Caco-2 (cell line): ENCODE measurements at regions of chr6 and their contacts with region 1.

Region 1: DNA sequence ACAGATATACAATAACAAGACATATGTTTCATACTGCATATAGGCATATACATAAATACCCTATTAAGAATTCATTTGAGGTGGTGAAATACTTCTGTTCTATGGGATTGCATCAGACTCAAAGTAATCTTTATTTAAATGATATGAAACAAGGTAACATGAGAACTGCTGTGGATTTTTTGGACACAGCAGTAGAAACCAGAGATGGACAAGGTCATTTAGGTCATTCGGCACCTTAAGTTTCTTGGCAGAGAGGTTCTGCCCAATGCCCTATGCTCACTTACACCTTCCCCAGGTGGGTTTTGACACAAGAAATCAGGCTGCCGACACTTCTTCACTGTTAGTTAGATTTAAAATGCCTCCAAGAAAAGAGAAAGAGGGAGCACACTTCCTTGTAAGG is 43.9 kb upstream of the RBM24 start:
- DNase-seq: no peak
- H3K4me3 ChIP-seq: no peak overlapping the region
- H3K4me3 Mint-ChIP-seq: no peak overlapping the region
- H3K27ac Mint-ChIP-seq: no peak overlapping the region
- H3K4me1 ChIP-seq: no peaks in the 10 kb centered on the region
- H3K4me1 Mint-ChIP-seq: no peaks in the 10 kb centered on the region
- H3K27me3 ChIP-seq: no peaks in the 10 kb centered on the region
- H3K27me3 Mint-ChIP-seq: peaks cover 4% of the 10 kb centered on the region
- CTCF ChIP-seq: no peak

Region 2: DNA sequence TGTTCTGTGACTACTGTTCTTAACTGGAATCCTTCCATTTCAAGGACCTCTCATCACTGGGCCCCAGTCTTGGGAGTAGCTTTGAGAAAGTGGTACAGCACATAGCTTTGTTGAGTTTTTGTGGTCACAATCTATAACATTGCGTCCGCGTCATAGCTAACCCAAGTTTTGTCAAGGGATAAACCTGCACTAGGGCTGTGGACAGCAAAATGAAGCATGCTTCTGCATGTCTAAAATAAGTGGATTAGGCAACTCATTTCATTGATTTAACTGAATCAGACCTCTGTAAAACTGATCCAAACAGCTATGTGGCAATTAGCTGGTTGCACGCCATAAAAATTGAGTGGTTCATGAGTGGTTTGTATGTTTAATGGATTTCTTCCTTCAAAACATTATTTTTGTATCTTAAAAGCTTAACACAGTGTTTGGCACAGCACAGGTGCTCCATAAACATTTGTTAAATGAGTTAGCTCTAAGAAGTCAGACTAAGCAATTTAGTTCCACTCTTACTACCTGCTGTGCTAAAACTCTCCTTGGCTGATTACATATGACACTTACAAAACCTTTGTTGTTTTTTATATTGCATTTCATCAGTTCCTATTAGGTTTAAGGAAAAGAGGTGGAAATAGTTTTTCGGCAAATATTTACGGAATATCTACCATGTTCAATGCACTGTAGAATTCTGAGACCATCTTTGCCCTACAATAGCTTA is 315.7 kb before region 1 on chr6:
- CTCF ChIA-PET with region 1: no interaction called
- POLR2A ChIA-PET with region 1: no interaction called
- intact Hi-C with region 1: no loop called
- DNase-seq: no peak
- H3K4me3 ChIP-seq: no peak overlapping the region
- H3K4me3 Mint-ChIP-seq: no peak overlapping the region
- H3K27ac Mint-ChIP-seq: no peak overlapping the region
- H3K4me1 ChIP-seq: no peaks in the 10 kb centered on the region
- H3K4me1 Mint-ChIP-seq: no peaks in the 10 kb centered on the region
- H3K27me3 ChIP-seq: no peaks in the 10 kb centered on the region
- H3K27me3 Mint-ChIP-seq: peaks cover 11% of the 10 kb centered on the region
- CTCF ChIP-seq: no peak

Region 3: GRCh38 chr6:18088419-18089296 is 851.4 kb after region 1 on chr6:
- CTCF ChIA-PET with region 1: no interaction called
- POLR2A ChIA-PET with region 1: no interaction called
- intact Hi-C with region 1: loop called (anchors 5 kb)
- DNase-seq: no peak
- H3K4me3 ChIP-seq: no peak overlapping the region
- H3K4me3 Mint-ChIP-seq: no peak overlapping the region
- H3K27ac Mint-ChIP-seq: no peak overlapping the region
- H3K4me1 ChIP-seq: no peaks in the 10 kb centered on the region
- H3K4me1 Mint-ChIP-seq: no peaks in the 10 kb centered on the region
- H3K27me3 ChIP-seq: no peaks in the 10 kb centered on the region
- H3K27me3 Mint-ChIP-seq: no peaks in the 10 kb centered on the region
- CTCF ChIP-seq: no peak